Sigmoid colon (tissue), 7 donors: ENCODE measurements at regions of chr18 and their contacts with region 1.

Region 1: DNA sequence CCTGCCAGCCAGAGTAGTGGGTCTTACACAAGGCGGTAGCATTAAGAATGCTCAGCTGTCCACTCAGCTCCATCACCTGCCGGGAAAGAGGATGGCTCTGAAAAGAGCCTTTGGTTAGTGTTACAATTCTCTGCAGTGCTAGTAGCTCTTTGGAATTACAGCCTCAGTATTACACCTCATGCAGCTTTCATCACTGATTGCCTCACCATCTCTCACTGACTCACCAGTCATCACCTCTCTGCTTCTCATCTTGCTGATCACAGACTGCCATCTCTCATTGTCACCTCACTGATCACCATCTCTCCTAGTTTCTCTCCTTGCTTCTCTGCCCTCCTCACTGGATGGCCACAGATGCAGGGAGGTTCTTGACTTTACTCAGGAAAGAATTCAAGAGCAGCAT is 573.5 kb upstream of the SETBP1 start:
- DNase-seq: no peak
- H3K4me3 ChIP-seq: no peak overlapping the region
- H3K27ac ChIP-seq: no peak overlapping the region
- H3K4me1 ChIP-seq: no peaks in the 10 kb centered on the region
- H3K27me3 ChIP-seq: no peaks in the 10 kb centered on the region
- CTCF ChIP-seq: no peak
- EP300 ChIP-seq: no peak
- POLR2A ChIP-seq: no peak

Region 2: DNA sequence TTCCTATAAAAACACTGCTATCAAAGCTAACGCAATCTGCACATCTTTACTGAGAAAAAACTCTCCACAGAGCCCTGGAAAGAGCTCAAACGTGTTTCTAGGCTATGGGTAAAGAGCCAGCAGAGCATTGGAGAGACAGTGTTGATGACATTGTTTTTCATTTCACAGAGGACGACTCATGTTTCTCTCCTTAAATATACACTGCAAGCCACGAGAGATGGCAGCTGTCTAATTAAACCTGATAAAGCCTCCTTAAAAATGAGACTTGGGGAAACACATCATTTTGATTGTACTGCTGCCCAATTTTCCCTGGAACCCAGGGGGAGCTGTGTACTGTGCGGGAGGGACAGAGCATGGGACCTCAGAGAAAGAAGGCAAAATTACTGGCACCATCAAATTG is 279.2 kb after region 1 on chr18:
- intact Hi-C with region 1: no loop called
- DNase-seq: no peak
- H3K4me3 ChIP-seq: no peak overlapping the region
- H3K27ac ChIP-seq: no peak overlapping the region
- H3K4me1 ChIP-seq: peaks cover 0 to 17% (median 5%) of the 10 kb centered on the region in 4 donors
- H3K27me3 ChIP-seq: no peaks in the 10 kb centered on the region
- CTCF ChIP-seq: no peak
- EP300 ChIP-seq: no peak
- POLR2A ChIP-seq: no peak

Region 3: GRCh38 chr18:45212181-45213039 is 1105.2 kb after region 1 on chr18:
- intact Hi-C with region 1: loop called (anchors 10 kb)
- DNase-seq: peak; percentile 90
- H3K4me3 ChIP-seq: no peak overlapping the region
- H3K27ac ChIP-seq: no peak overlapping the region
- H3K4me1 ChIP-seq: peaks cover 0 to 6% (median 2%) of the 10 kb centered on the region in 4 donors
- H3K27me3 ChIP-seq: no peaks in the 10 kb centered on the region
- CTCF ChIP-seq: peak; percentile 89 to 96 (median 92)
- EP300 ChIP-seq: no peak
- POLR2A ChIP-seq: no peak